ENCODE measurements at regions of chr16 and their contacts with region 1.

Region 1: GRCh38 chr16:75238132-75238852 is 13.1 kb downstream of the BCAR1 start:
- DNase-seq: no peak
- ATAC-seq: no peak
- H3K4me3 ChIP-seq: no peak overlapping the region
- H3K27ac ChIP-seq: peak overlapping the region; percentile 48 to 84; a peak in 5 of 6 replicates
- H3K4me1 ChIP-seq: peaks cover 39% of the 10 kb centered on the region
- CTCF ChIP-seq: no peak
- EP300 ChIP-seq: no peak
- POLR2A ChIP-seq: no peak
- RAD21 ChIP-seq: no peak

Region 2: GRCh38 chr16:75206749-75207451 is 31.4 kb before region 1 on chr16 and contains the start of gene CTRB2:
- CTCF ChIA-PET with region 1: interaction called, 123 read pairs
- POLR2A ChIA-PET with region 1: no interaction called
- DNase-seq: no peak
- ATAC-seq: peak in 1 of 2 experiments; percentile 17; a peak in 3 of 6 replicates
- H3K4me3 ChIP-seq: no peak within 1 kb of the TSS
- H3K27ac ChIP-seq: no peak within 1 kb of the TSS
- H3K4me1 ChIP-seq: no peaks in the 10 kb centered on the region
- CTCF ChIP-seq: no peak
- EP300 ChIP-seq: no peak
- POLR2A ChIP-seq: no peak
- RAD21 ChIP-seq: no peak
- polyA plus RNA-seq, gene CTRB2: not detected in 2 replicates

Region 3: GRCh38 chr16:75265845-75266701 is 27.8 kb after region 1 on chr16:
- CTCF ChIA-PET with region 1: interaction called, 31 read pairs
- POLR2A ChIA-PET with region 1: no interaction called
- DNase-seq: peak; percentile 77 to 85
- ATAC-seq: peak; percentile 60 to 68
- H3K4me3 ChIP-seq: peak overlapping the region; percentile 97
- H3K27ac ChIP-seq: peak overlapping the region; percentile 97
- H3K4me1 ChIP-seq: peaks cover 58% of the 10 kb centered on the region
- CTCF ChIP-seq: no peak
- EP300 ChIP-seq: no peak
- POLR2A ChIP-seq: peak; percentile 53
- RAD21 ChIP-seq: peak; percentile 5 to 29; a peak in 2 of 5 replicates

Region 4: GRCh38 chr16:75305364-75306098 is 67.2 kb after region 1 on chr16:
- CTCF ChIA-PET with region 1: interaction called, 28 read pairs
- POLR2A ChIA-PET with region 1: no interaction called
- DNase-seq: peak; percentile 97 to 99
- ATAC-seq: peak; percentile 92 to 95
- H3K4me3 ChIP-seq: peak overlapping the region; percentile 26; the same call in 2 of the 3 replicates
- H3K27ac ChIP-seq: peak overlapping the region; percentile 91 to 96
- H3K4me1 ChIP-seq: peaks cover 51% of the 10 kb centered on the region
- CTCF ChIP-seq: no peak
- EP300 ChIP-seq: peak; percentile 78 to 83; a peak in 3 of 5 replicates
- POLR2A ChIP-seq: no peak
- RAD21 ChIP-seq: peak in 1 of 2 experiments; percentile 57; a peak in 3 of 5 replicates

Region 5: GRCh38 chr16:75361936-75362335 is 123.6 kb after region 1 on chr16:
- CTCF ChIA-PET with region 1: interaction called, 37 read pairs
- POLR2A ChIA-PET with region 1: no interaction called
- DNase-seq: no peak
- ATAC-seq: no peak
- H3K4me3 ChIP-seq: no peak overlapping the region
- H3K27ac ChIP-seq: no peak overlapping the region
- H3K4me1 ChIP-seq: no peaks in the 10 kb centered on the region
- CTCF ChIP-seq: no peak
- EP300 ChIP-seq: no peak
- POLR2A ChIP-seq: no peak
- RAD21 ChIP-seq: no peak

Region 6: GRCh38 chr16:75385507-75386152 is 147.3 kb after region 1 on chr16:
- CTCF ChIA-PET with region 1: interaction called, 171 read pairs
- POLR2A ChIA-PET with region 1: no interaction called
- DNase-seq: peak; percentile 21 to 78
- ATAC-seq: peak in 1 of 2 experiments; percentile 55; a peak in 3 of 6 replicates
- H3K4me3 ChIP-seq: no peak overlapping the region
- H3K27ac ChIP-seq: peak overlapping the region; percentile 59 to 72; a peak in 3 of 6 replicates
- H3K4me1 ChIP-seq: peaks cover 7% of the 10 kb centered on the region; the same call in 2 of the 3 replicates
- CTCF ChIP-seq: peak; percentile 93
- EP300 ChIP-seq: no peak
- POLR2A ChIP-seq: no peak
- RAD21 ChIP-seq: peak; percentile 92 to 95